Activated B cell treated with CpG ODN at 0.5 μM for 24 hours (primary cell): ENCODE measurements at regions of chr7 and their contacts with region 1.

Region 1: DNA sequence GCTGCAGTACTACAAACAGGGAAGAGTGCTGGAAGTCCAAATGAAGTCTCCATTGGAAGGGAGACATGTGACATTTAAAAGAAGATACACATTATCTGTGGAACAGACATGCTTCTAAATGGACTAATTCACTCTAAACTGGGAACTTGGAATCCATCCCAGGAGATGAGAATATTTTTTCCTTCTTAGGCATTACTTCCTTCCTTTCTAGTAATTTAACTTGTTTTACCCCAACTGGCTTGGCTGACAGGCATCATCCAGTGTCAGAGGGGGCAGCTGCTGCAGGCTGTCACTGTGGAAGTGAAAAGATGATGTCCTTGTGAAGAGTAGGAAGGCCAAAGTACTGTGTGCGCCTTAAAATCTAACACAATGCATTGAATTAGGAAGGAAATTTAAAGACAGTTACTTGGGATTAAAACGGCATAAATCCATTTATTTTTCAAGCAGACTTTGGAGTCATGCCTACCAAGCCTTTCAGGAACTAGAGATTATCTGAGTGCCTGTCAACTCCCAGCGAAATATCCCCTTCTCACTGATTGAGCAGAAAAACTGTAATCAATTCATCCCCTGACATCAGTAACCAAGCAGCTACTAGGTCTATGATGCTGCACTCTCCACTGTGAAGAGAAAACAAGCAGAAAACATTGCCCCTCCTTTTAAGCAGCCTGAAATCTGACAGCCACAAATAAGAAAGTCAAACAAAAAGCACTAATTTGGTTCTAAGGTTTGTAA is 161.2 kb downstream of the DGKI start:
- DNase-seq: no peak
- ATAC-seq: no peak
- H3K4me3 Mint-ChIP-seq: no peak overlapping the region
- H3K27ac Mint-ChIP-seq: no peak overlapping the region
- H3K4me1 Mint-ChIP-seq: no peaks in the 10 kb centered on the region
- H3K27me3 Mint-ChIP-seq: no peaks in the 10 kb centered on the region
- CTCF ChIP-seq: no peak

Region 2: GRCh38 chr7:137462074-137462715 is 223.4 kb before region 1 on chr7:
- CTCF ChIA-PET with region 1: no interaction called
- POLR2A ChIA-PET with region 1: no interaction called
- intact Hi-C with region 1: no loop called
- DNase-seq: no peak
- ATAC-seq: no peak
- H3K4me3 Mint-ChIP-seq: no peak overlapping the region
- H3K27ac Mint-ChIP-seq: no peak overlapping the region
- H3K4me1 Mint-ChIP-seq: no peaks in the 10 kb centered on the region
- H3K27me3 Mint-ChIP-seq: peaks cover 1% of the 10 kb centered on the region
- CTCF ChIP-seq: no peak

Region 3: GRCh38 chr7:137626469-137627067 is 59.0 kb before region 1 on chr7:
- CTCF ChIA-PET with region 1: no interaction called
- POLR2A ChIA-PET with region 1: no interaction called
- intact Hi-C with region 1: loop called (anchors 2 kb)
- DNase-seq: no peak
- ATAC-seq: no peak
- H3K4me3 Mint-ChIP-seq: no peak overlapping the region
- H3K27ac Mint-ChIP-seq: no peak overlapping the region
- H3K4me1 Mint-ChIP-seq: no peaks in the 10 kb centered on the region
- H3K27me3 Mint-ChIP-seq: peaks cover 6% of the 10 kb centered on the region
- CTCF ChIP-seq: no peak

Region 4: GRCh38 chr7:137801003-137801402 is 115.4 kb after region 1 on chr7:
- CTCF ChIA-PET with region 1: no interaction called
- POLR2A ChIA-PET with region 1: no interaction called
- intact Hi-C with region 1: no loop called
- DNase-seq: no peak
- ATAC-seq: no peak
- H3K4me3 Mint-ChIP-seq: no peak overlapping the region
- H3K27ac Mint-ChIP-seq: no peak overlapping the region
- H3K4me1 Mint-ChIP-seq: peaks cover 4% of the 10 kb centered on the region
- H3K27me3 Mint-ChIP-seq: no peaks in the 10 kb centered on the region
- CTCF ChIP-seq: no peak